ENCODE measurements at regions of chr1 and their contacts with region 1.

Region 1: GRCh38 chr1:32005522-32005921 is 8.1 kb upstream of the KHDRBS1 start:
- DNase-seq: no peak
- ATAC-seq: no peak
- H3K4me3 ChIP-seq: no peak overlapping the region
- H3K4me3 Mint-ChIP-seq: no peak overlapping the region
- H3K27ac ChIP-seq: no peak overlapping the region
- H3K27ac Mint-ChIP-seq: no peak overlapping the region
- H3K4me1 ChIP-seq: peaks cover 3% of the 10 kb centered on the region
- H3K4me1 Mint-ChIP-seq: peaks cover 4% of the 10 kb centered on the region
- H3K27me3 ChIP-seq: no peaks in the 10 kb centered on the region
- H3K27me3 Mint-ChIP-seq: no peaks in the 10 kb centered on the region
- CTCF ChIP-seq: no peak

Region 2: DNA sequence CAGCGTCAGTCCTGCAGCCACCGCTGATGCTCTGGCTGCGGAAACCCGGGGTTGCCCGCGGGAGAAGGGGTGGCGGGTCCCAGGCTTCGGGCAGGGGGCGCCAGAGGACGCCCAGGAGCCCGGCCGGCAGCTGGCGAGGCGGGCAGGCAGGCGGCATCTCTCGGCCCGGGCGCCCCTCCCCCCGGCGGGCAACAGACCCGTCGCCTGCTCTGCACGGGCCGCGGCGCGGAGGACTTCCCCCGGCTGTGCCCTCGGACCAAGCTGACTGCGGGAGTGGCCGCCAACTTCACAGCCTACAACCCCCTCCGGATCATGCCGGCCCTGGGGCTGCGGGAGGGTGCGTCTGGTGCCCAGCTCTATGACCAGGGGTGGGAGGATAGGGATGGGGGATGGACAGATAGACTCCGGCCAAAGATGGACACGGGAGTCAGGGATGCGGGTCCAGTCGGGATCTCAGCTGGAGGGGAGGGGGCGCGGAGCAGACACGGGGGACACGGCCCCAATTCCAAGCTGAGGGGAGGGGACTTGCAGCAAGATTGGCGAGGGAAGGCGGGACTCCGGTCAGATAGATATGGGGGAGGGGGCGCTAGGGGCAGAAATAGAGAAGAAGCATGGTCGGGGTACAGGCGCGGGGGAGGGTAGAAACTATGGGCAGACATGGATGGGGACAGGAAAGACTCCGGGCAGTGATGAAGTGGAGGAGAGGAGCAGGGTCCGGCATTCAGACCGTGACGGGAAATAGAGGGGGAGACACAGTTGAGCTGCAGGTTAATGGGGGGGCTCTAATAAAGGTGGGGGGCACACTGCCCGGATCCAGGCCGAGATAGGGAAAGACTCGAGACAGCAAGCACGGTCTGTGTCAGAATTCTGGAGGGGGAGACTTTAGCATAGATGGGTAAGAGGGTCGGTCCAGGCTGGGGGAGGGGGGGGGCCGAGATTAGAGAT is 242.5 kb before region 1 on chr1:
- CTCF ChIA-PET with region 1: interaction called, 10 read pairs
- POLR2A ChIA-PET with region 1: no interaction called
- intact Hi-C with region 1: no loop called
- DNase-seq: peak; percentile 39 to 86 (median 69)
- ATAC-seq: peak; percentile 43
- H3K4me3 ChIP-seq: peak overlapping the region; percentile 41 to 57
- H3K4me3 Mint-ChIP-seq: peak overlapping the region; percentile 80
- H3K27ac ChIP-seq: no peak overlapping the region
- H3K27ac Mint-ChIP-seq: no peak overlapping the region
- H3K4me1 ChIP-seq: peaks cover 40% of the 10 kb centered on the region
- H3K4me1 Mint-ChIP-seq: peaks cover 29% of the 10 kb centered on the region
- H3K27me3 ChIP-seq: peaks cover 11 to 14% of the 10 kb centered on the region in 2 experiments
- H3K27me3 Mint-ChIP-seq: peaks cover 11% of the 10 kb centered on the region
- CTCF ChIP-seq: peak; percentile 45

Region 3: GRCh38 chr1:31977385-31978131 is 28.0 kb before region 1 on chr1:
- CTCF ChIA-PET with region 1: interaction called, 6 read pairs
- POLR2A ChIA-PET with region 1: no interaction called
- intact Hi-C with region 1: loop called in 1 of 2 experiments (anchors 1 kb)
- DNase-seq: peak in 2 of 9 experiments; percentile 26 to 40
- ATAC-seq: no peak
- H3K4me3 ChIP-seq: no peak overlapping the region
- H3K4me3 Mint-ChIP-seq: no peak overlapping the region
- H3K27ac ChIP-seq: no peak overlapping the region
- H3K27ac Mint-ChIP-seq: no peak overlapping the region
- H3K4me1 ChIP-seq: peaks cover 15% of the 10 kb centered on the region
- H3K4me1 Mint-ChIP-seq: peaks cover 22% of the 10 kb centered on the region
- H3K27me3 ChIP-seq: no peaks in the 10 kb centered on the region
- H3K27me3 Mint-ChIP-seq: no peaks in the 10 kb centered on the region
- CTCF ChIP-seq: no peak

Region 4: GRCh38 chr1:31984419-31985347 is 20.8 kb before region 1 on chr1:
- CTCF ChIA-PET with region 1: interaction called, 10 read pairs
- POLR2A ChIA-PET with region 1: no interaction called
- intact Hi-C with region 1: no loop called
- DNase-seq: peak in 8 of 9 experiments; percentile 16 to 66 (median 46)
- ATAC-seq: peak; percentile 69
- H3K4me3 ChIP-seq: no peak overlapping the region
- H3K4me3 Mint-ChIP-seq: peak overlapping the region; percentile 48
- H3K27ac ChIP-seq: peak overlapping the region in 1 of 2 experiments; percentile 80
- H3K27ac Mint-ChIP-seq: peak overlapping the region; percentile 92
- H3K4me1 ChIP-seq: peaks cover 52% of the 10 kb centered on the region
- H3K4me1 Mint-ChIP-seq: peaks cover 56% of the 10 kb centered on the region
- H3K27me3 ChIP-seq: no peaks in the 10 kb centered on the region
- H3K27me3 Mint-ChIP-seq: no peaks in the 10 kb centered on the region
- CTCF ChIP-seq: no peak

Measured in CD8-positive, alpha-beta T cell (primary cell).